Sigmoid colon (tissue), 7 donors: ENCODE measurements at regions of chrX and their contacts with region 1.

Region 1: DNA sequence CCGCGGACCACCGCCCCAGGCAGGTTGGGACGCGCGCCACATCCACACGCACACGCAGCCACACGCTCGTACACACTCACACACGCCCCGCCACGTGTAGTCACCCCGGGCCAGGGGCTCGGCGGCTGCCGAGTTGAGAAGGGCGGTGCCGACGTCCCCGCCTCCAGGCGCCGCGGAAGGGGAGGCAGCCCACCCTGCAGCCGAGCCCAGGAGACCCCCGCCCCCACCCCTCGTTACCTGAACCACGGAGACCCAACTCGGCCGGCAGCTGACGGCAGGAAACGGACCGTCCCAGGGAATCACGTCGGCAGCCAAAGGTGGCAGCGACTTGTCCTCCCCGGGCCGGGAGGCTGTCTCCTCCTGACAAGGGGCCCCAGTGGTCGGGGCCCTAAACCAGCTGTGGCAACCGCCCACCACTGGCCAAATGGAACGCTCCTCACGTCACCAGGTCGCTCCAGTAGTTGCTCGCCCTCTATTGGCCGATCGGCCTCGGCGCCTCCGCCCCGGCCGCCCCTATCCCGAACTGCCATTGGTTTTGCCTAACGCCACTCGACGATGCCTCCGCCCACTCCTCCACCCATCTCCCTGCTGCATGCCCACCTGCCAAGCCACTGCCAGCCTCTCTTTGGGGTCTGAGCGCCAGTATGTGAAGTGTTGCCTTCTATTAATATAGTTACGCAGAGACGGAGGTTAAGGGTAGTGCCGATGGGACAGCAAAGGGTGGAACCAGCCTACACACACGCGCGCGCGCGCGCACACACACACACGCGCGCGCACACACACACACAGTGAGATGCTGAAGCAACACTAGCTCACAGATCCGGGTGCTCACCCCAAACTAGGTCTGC is at the start of gene ZDHHC9:
- DNase-seq: peak; percentile 93
- H3K4me3 ChIP-seq: peak within 1 kb of the TSS; percentile 62 to 74 (median 72)
- H3K27ac ChIP-seq: peak within 1 kb of the TSS; percentile 77 to 86 (median 80)
- H3K4me1 ChIP-seq: peaks cover 0 to 5% (median 2%) of the 10 kb centered on the region in 4 donors
- H3K27me3 ChIP-seq: no peaks in the 10 kb centered on the region
- CTCF ChIP-seq: no peak
- EP300 ChIP-seq: no peak
- POLR2A ChIP-seq: peak; percentile 31 to 35
- total RNA-seq, gene ZDHHC9: 9.3 to 18.1 (median 13.4) TPM

Region 2: DNA sequence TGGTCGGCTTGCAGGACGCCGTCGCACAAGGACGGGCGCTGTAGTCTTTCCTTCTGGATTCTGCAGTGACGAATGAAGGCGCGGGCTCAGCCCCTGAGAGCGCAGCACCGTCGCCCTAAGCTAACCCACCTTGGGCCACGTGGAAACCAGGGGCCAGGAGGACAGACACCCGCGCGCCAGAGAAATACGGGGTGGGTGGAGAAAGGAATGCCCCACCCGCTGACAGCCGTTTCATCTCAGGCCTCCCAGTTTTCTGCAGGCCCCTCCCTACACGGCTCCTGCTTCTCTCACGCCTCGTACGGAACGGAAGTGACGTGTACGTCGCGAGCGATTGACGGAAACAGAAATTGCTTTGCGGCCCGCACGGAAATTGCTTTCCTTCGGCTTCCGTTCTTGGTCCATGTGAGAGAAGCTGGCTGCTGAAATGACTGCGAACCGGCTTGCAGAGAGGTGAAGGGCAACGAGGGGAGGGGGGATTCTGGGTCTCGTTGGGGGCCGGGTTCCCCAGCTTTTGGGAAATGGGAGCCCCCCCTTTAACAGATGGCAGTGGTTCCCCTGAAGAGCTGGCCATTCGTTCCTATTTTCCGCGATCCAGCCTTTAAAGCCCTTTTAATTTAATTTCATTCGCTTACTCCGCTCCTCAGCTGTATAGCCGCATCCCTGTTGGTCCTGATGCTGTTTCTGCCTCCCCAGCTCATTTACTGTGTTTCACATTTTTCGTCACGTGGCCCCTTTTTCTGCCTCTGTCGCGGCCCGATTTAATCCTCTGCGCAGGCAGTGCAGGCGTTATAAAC is 62.3 kb after region 1 on chrX and contains the start of gene UTP14A:
- intact Hi-C with region 1: loop called (anchors 5 kb)
- DNase-seq: peak; percentile 95
- H3K4me3 ChIP-seq: peak within 1 kb of the TSS; percentile 52 to 68 (median 60)
- H3K27ac ChIP-seq: peak within 1 kb of the TSS; percentile 79 to 81 (median 80)
- H3K4me1 ChIP-seq: peaks cover 0 to 7% (median 4%) of the 10 kb centered on the region in 4 donors
- H3K27me3 ChIP-seq: no peaks in the 10 kb centered on the region
- CTCF ChIP-seq: no peak
- EP300 ChIP-seq: no peak
- POLR2A ChIP-seq: no peak
- total RNA-seq, gene UTP14A: 14.4 to 18.2 (median 15.2) TPM

Region 3: DNA sequence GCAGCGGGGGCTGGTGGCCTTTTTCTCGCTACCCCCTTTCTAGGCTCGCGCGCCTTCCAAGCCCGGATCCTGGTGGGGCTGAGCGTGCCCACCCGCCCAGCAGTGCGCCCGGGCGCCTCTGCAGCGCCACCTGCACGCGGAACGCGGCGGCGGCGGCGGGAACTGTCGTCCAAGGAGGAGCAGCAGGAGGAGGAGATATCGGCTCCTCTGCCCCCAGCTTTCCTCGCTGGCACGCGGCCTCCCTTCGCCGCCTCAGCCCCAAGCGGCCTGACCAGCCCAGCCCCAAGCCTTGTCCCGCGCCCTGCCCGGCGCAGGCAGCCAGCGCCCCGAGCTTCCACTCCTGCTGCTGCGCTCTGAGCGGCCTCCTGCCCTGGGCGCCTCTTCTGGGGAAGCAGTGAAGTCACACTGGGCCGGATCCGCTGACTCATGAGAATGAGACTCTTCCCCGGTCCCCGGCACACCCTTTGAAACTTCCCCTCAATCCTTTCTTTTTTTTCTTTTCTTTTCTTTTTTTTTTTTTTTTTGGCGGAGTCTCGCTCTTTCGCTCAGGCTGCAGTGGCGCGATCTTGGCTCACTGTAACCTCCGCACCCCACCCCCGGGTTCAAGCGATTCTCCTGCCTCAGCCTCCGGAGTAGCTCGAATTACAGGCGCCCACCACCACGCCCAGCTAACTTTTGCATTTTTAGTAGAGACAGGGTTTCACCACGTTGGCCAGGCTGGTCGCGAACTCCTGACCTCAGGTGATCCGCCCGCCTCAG is 277.2 kb after region 1 on chrX:
- intact Hi-C with region 1: loop called (anchors 5 kb)
- DNase-seq: peak; percentile 89
- H3K4me3 ChIP-seq: peak overlapping the region; percentile 16 to 46 (median 38)
- H3K27ac ChIP-seq: peak overlapping the region; percentile 65 to 81 (median 74)
- H3K4me1 ChIP-seq: peaks cover 0 to 48% (median 25%) of the 10 kb centered on the region in 4 donors
- H3K27me3 ChIP-seq: no peaks in the 10 kb centered on the region
- CTCF ChIP-seq: peak; percentile 57 to 66 (median 62)
- EP300 ChIP-seq: no peak
- POLR2A ChIP-seq: no peak